Activated CD4-positive, alpha-beta T cell treated with anti-CD3 and anti-CD28 coated beads for 36 hours (primary cell): ENCODE measurements at regions of chr3 and their contacts with region 1.

Region 1: DNA sequence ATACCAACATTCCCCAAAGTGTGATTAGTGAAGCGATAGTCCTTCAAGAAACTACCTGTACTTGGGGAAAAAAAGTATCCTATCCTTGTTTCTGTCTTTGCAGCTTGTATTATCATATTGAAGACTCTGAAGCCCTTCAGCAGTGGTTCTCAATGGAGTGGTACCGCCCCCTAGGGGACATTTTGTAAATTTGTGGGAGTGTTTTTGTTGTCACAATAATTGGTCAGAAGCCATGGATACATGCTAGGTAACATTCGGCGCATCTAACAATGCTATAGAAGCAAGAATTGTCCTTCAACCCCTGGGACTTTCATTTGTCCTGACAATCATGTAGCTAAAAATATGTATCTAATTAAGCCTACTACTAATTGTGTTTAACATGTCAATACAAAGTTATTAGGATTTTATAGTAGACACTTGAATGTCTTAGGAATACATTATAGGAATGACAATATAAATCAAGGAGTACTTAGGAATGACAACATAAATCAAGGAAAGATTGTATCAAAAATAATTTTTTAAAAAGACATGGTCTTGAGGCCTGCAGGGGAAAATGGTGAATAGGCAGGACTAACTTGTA is 53.7 kb downstream of the NMD3 start:
- DNase-seq: peak; percentile 63
- ATAC-seq: peak; percentile 42
- H3K4me3 Mint-ChIP-seq: no peak overlapping the region
- H3K27ac Mint-ChIP-seq: no peak overlapping the region
- H3K4me1 Mint-ChIP-seq: no peaks in the 10 kb centered on the region
- H3K27me3 Mint-ChIP-seq: no peaks in the 10 kb centered on the region

Region 2: GRCh38 chr3:160707187-160707794 is 567.5 kb before region 1 on chr3:
- CTCF ChIA-PET with region 1: no interaction called
- POLR2A ChIA-PET with region 1: no interaction called
- intact Hi-C with region 1: loop called in 1 of 2 experiments (anchors 2 kb)
- DNase-seq: peak; percentile 44
- ATAC-seq: peak; percentile 60
- H3K4me3 Mint-ChIP-seq: no peak overlapping the region
- H3K27ac Mint-ChIP-seq: no peak overlapping the region
- H3K4me1 Mint-ChIP-seq: no peaks in the 10 kb centered on the region
- H3K27me3 Mint-ChIP-seq: peaks cover 21% of the 10 kb centered on the region

Region 3: GRCh38 chr3:160956806-160957205 is 318.0 kb before region 1 on chr3:
- CTCF ChIA-PET with region 1: interaction called, 3 read pairs
- POLR2A ChIA-PET with region 1: no interaction called
- intact Hi-C with region 1: loop called in 1 of 2 experiments (anchors 2 kb)
- DNase-seq: no peak
- ATAC-seq: no peak
- H3K4me3 Mint-ChIP-seq: no peak overlapping the region
- H3K27ac Mint-ChIP-seq: no peak overlapping the region
- H3K4me1 Mint-ChIP-seq: no peaks in the 10 kb centered on the region
- H3K27me3 Mint-ChIP-seq: peaks cover 2% of the 10 kb centered on the region

Region 4: DNA sequence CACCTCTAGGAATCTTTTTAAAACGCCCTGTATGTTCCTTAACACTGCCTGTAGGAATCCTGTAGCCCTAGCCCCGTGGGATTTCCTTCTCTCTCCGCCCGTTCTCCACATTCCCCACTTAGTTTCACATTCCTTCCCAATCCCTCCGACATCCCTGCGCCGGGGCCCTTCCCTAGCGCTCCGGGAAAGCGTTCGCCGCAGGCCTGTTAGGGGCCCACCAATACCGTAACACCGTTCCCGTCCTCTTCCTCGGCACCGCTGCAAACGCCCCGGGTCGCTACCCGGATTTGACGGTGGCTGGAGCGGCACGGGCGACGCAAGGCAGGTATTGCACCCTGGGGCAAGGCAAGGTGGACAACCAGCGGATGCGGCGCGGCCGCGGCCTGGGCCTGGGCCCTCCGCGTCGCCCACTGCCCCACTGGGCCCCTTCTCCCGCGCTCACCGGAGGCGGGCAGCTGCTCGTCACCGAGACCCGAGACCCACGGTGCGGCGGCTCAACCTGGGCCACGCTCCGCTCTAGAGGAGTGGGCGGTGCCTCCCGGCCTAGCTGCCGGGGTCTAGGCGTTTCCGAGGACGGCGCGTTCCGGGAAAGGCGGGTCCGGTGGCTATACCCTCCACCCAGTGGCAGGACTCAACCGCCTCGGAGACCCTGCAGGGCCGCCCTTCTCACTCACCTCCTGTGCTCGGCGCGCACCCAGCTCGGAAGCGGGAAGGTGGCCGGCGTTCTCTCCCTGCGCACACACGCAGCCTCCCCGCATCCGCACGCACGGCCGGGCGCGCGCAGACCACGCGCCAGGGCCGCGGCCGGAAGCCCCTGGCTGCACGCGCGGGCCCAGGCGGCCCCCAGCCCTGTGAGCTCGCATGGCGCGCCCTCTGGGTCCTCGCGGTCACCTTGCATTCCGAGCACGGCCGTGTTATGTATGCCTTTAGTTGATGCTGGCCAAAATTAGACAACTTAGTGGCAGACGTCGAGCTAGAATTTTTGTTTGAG is 170.0 kb before region 1 on chr3 and contains the start of gene B3GALNT1:
- CTCF ChIA-PET with region 1: no interaction called
- POLR2A ChIA-PET with region 1: no interaction called
- intact Hi-C with region 1: loop called in 1 of 2 experiments (anchors 10 kb)
- DNase-seq: peak; percentile 45
- ATAC-seq: peak; percentile 82
- H3K4me3 Mint-ChIP-seq: peak within 1 kb of the TSS; percentile 54
- H3K27ac Mint-ChIP-seq: peak within 1 kb of the TSS; percentile 28
- H3K4me1 Mint-ChIP-seq: peaks cover 7% of the 10 kb centered on the region
- H3K27me3 Mint-ChIP-seq: peaks cover 24% of the 10 kb centered on the region
- total RNA-seq, gene B3GALNT1: 0.60 to 1.1 TPM

Region 5: GRCh38 chr3:161187046-161187445 is 87.8 kb before region 1 on chr3:
- CTCF ChIA-PET with region 1: no interaction called
- POLR2A ChIA-PET with region 1: no interaction called
- intact Hi-C with region 1: no loop called
- DNase-seq: no peak
- ATAC-seq: no peak
- H3K4me3 Mint-ChIP-seq: no peak overlapping the region
- H3K27ac Mint-ChIP-seq: no peak overlapping the region
- H3K4me1 Mint-ChIP-seq: no peaks in the 10 kb centered on the region
- H3K27me3 Mint-ChIP-seq: peaks cover 2% of the 10 kb centered on the region

Region 6: GRCh38 chr3:161409069-161409468 is 134.3 kb after region 1 on chr3:
- CTCF ChIA-PET with region 1: interaction called, 34 read pairs
- POLR2A ChIA-PET with region 1: no interaction called
- intact Hi-C with region 1: loop called (anchors 1 kb)
- DNase-seq: peak; percentile 53
- ATAC-seq: no peak
- H3K4me3 Mint-ChIP-seq: no peak overlapping the region
- H3K27ac Mint-ChIP-seq: no peak overlapping the region
- H3K4me1 Mint-ChIP-seq: peaks cover 24% of the 10 kb centered on the region
- H3K27me3 Mint-ChIP-seq: peaks cover 2% of the 10 kb centered on the region